ENCODE measurements at regions of chr3 and their contacts with region 1.

Region 1: GRCh38 chr3:128879125-128879969 is at the start of gene ACAD9:
- DNase-seq: peak; percentile 98 to 99
- ATAC-seq: peak; percentile 90 to 97 (median 95)
- H3K4me3 ChIP-seq: peak within 1 kb of the TSS; percentile 74
- H3K4me3 Mint-ChIP-seq: peak within 1 kb of the TSS; percentile 81
- H3K27ac ChIP-seq: peak within 1 kb of the TSS; percentile 93
- H3K27ac Mint-ChIP-seq: peak within 1 kb of the TSS; percentile 90 to 92
- H3K4me1 ChIP-seq: peaks cover 25% of the 10 kb centered on the region
- H3K4me1 Mint-ChIP-seq: peaks cover 56 to 61% of the 10 kb centered on the region in 2 donors
- H3K27me3 ChIP-seq: no peaks in the 10 kb centered on the region
- H3K27me3 Mint-ChIP-seq: peaks cover 3 to 4% of the 10 kb centered on the region in 2 donors
- CTCF ChIP-seq: no peak
- total RNA-seq, gene ACAD9: 43.4 to 71.3 (median 54.2) TPM

Region 2: GRCh38 chr3:128650096-128651050 is 229.0 kb before region 1 on chr3 and contains the start of gene RPN1:
- intact Hi-C with region 1: loop called (anchors 2 kb)
- DNase-seq: peak; percentile 92 to 97
- ATAC-seq: peak; percentile 94 to 99 (median 98)
- H3K4me3 ChIP-seq: peak within 1 kb of the TSS; percentile 100
- H3K4me3 Mint-ChIP-seq: peak within 1 kb of the TSS; percentile 92
- H3K27ac ChIP-seq: peak within 1 kb of the TSS; percentile 98
- H3K27ac Mint-ChIP-seq: peak within 1 kb of the TSS; percentile 86 to 92
- H3K4me1 ChIP-seq: peaks cover 15% of the 10 kb centered on the region
- H3K4me1 Mint-ChIP-seq: peaks cover 28 to 31% of the 10 kb centered on the region in 2 donors
- H3K27me3 ChIP-seq: no peaks in the 10 kb centered on the region
- H3K27me3 Mint-ChIP-seq: no peaks in the 10 kb centered on the region
- CTCF ChIP-seq: no peak
- total RNA-seq, gene RPN1: 90.5 to 130 (median 92.1) TPM

Region 3: GRCh38 chr3:128674161-128674784 is 205.1 kb before region 1 on chr3:
- intact Hi-C with region 1: no loop called
- DNase-seq: no peak
- ATAC-seq: no peak
- H3K4me3 ChIP-seq: no peak overlapping the region
- H3K4me3 Mint-ChIP-seq: no peak overlapping the region
- H3K27ac ChIP-seq: no peak overlapping the region
- H3K27ac Mint-ChIP-seq: peak overlapping the region in 1 of 2 donors; percentile 64
- H3K4me1 ChIP-seq: peaks cover 18% of the 10 kb centered on the region
- H3K4me1 Mint-ChIP-seq: peaks cover 11 to 14% of the 10 kb centered on the region in 2 donors
- H3K27me3 ChIP-seq: no peaks in the 10 kb centered on the region
- H3K27me3 Mint-ChIP-seq: peaks cover 9 to 11% of the 10 kb centered on the region in 2 donors
- CTCF ChIP-seq: no peak

Region 4: DNA sequence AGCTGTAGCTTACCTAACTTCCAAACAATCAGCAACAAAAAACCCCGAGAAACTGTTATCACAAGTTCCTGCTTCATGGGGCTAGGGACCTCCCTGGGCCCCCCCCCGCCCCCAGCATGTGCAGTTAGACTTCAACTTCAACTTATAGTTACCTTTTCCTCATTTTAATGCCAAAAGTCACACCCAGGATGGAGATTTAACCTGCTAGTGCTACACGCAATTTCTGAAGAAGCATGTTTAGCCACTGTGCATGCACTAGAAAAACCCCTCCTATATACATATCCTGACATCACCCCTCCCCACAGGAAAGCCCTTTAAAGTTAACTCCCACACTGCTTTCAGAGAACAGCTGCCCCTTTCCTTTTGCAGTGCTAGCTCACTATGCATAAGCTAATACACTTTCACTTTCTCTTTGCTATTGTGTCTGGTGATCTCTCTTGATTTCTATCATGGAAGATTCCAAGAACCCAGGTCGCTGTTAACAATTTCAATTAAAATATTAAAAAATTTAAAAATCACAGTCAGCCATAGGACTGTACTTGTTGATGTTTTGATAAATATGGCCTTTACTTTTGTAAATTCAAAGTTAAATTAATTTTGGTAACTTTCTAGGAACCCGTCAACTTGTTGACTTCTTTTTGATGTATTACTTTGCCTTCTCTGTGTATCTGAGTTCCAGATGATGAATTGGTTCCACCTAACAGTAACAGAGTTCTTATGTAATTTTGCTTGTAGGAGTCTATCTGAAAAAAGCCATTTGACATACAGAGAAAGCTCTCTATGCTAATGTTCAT is 75.1 kb before region 1 on chr3:
- intact Hi-C with region 1: loop called (anchors 1 kb)
- DNase-seq: peak; percentile 21 to 89
- ATAC-seq: peak; percentile 93 to 95 (median 95)
- H3K4me3 ChIP-seq: peak overlapping the region; percentile 10
- H3K4me3 Mint-ChIP-seq: peak overlapping the region; percentile 79
- H3K27ac ChIP-seq: peak overlapping the region; percentile 82
- H3K27ac Mint-ChIP-seq: peak overlapping the region; percentile 89 to 95
- H3K4me1 ChIP-seq: peaks cover 12% of the 10 kb centered on the region
- H3K4me1 Mint-ChIP-seq: peaks cover 47 to 52% of the 10 kb centered on the region in 2 donors
- H3K27me3 ChIP-seq: no peaks in the 10 kb centered on the region
- H3K27me3 Mint-ChIP-seq: no peaks in the 10 kb centered on the region
- CTCF ChIP-seq: no peak

Region 5: DNA sequence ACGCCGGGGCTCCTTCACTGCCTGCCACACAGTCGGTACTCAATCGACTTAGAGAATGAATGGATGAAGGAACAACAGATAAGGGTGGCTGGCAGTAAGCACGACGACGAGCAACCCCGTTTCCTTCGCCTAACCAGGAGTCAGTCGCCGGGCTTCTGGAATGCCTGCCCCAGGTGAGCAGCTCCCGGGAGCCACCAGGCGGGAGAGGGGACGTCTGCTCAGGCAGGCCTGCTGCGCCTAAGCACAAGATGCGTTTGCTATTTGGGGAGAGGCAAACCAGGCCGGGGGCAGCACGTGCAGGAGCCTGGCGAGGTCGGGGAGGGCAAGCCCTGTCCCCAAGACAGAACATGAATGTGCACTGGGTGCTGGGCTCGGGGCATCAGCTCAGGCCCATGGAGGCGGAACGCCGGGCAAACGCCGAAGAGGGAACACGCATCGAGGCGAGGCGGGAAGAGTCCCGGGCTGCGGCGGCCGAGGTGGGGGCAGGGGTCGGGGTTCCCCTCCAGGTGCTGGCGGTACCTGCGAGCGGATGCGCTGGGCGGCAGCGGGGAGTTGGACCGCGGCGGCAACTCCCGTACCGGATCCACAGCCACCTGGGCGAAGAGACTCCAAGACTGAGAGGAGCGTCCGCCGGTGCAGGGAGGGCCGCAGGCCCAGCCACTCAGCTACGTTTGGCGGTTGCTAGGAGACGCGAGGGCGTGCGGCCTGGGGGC is 114.3 kb after region 1 on chr3 and contains the start of gene CFAP92:
- intact Hi-C with region 1: no loop called
- DNase-seq: peak; percentile 90 to 95
- ATAC-seq: peak; percentile 97 to 100 (median 99)
- H3K4me3 ChIP-seq: peak within 1 kb of the TSS; percentile 18
- H3K4me3 Mint-ChIP-seq: peak within 1 kb of the TSS; percentile 78
- H3K27ac ChIP-seq: no peak within 1 kb of the TSS
- H3K27ac Mint-ChIP-seq: peak within 1 kb of the TSS in 1 of 2 donors; percentile 76
- H3K4me1 ChIP-seq: peaks cover 15% of the 10 kb centered on the region
- H3K4me1 Mint-ChIP-seq: peaks cover 16 to 18% of the 10 kb centered on the region in 2 donors
- H3K27me3 ChIP-seq: no peaks in the 10 kb centered on the region
- H3K27me3 Mint-ChIP-seq: peaks cover 8 to 9% of the 10 kb centered on the region in 2 donors
- CTCF ChIP-seq: no peak
- total RNA-seq, gene CFAP92: 0.26 to 0.43 (median 0.41) TPM

Measured in natural killer cell (primary cell).